Activated CD4-positive, alpha-beta T cell treated with anti-CD3 and anti-CD28 coated beads, Interleukin-2, amount 10 ng/mL, durations not matched to agents 7 days and 5 days (primary cell): ENCODE measurements at regions of chr5 and their contacts with region 1.

Region 1: GRCh38 chr5:141636413-141637122 is at the starts of genes HDAC3 and RELL2:
- DNase-seq: peak; percentile 92
- H3K4me3 Mint-ChIP-seq: peak within 1 kb of the TSS; percentile 92
- H3K27ac Mint-ChIP-seq: peak within 1 kb of the TSS; percentile 90
- H3K4me1 Mint-ChIP-seq: peaks cover 51% of the 10 kb centered on the region
- H3K27me3 Mint-ChIP-seq: no peaks in the 10 kb centered on the region
- total RNA-seq, gene HDAC3: 70.2 to 73.9 TPM
- total RNA-seq, gene RELL2: 25.1 to 26.9 TPM

Region 2: GRCh38 chr5:141590127-141590526 is 46.4 kb before region 1 on chr5:
- CTCF ChIA-PET with region 1: interaction called, 40 read pairs
- POLR2A ChIA-PET with region 1: no interaction called
- DNase-seq: no peak
- H3K4me3 Mint-ChIP-seq: no peak overlapping the region
- H3K27ac Mint-ChIP-seq: no peak overlapping the region
- H3K4me1 Mint-ChIP-seq: peaks cover 39% of the 10 kb centered on the region
- H3K27me3 Mint-ChIP-seq: no peaks in the 10 kb centered on the region

Region 3: GRCh38 chr5:141657937-141658545 is 21.5 kb after region 1 on chr5:
- CTCF ChIA-PET with region 1: no interaction called
- POLR2A ChIA-PET with region 1: no interaction called
- DNase-seq: no peak
- H3K4me3 Mint-ChIP-seq: no peak overlapping the region
- H3K27ac Mint-ChIP-seq: no peak overlapping the region
- H3K4me1 Mint-ChIP-seq: no peaks in the 10 kb centered on the region
- H3K27me3 Mint-ChIP-seq: peaks cover 4% of the 10 kb centered on the region